ENCODE measurements at regions of chr19 and their contacts with region 1.

Region 1: GRCh38 chr19:46542428-46543230 is 47.0 kb upstream of the PNMA8B start:
- DNase-seq: peak; percentile 90
- ATAC-seq: peak; percentile 64
- H3K4me3 Mint-ChIP-seq: no peak overlapping the region
- H3K27ac Mint-ChIP-seq: no peak overlapping the region
- H3K4me1 Mint-ChIP-seq: peaks cover 9% of the 10 kb centered on the region
- H3K27me3 Mint-ChIP-seq: no peaks in the 10 kb centered on the region

Region 2: DNA sequence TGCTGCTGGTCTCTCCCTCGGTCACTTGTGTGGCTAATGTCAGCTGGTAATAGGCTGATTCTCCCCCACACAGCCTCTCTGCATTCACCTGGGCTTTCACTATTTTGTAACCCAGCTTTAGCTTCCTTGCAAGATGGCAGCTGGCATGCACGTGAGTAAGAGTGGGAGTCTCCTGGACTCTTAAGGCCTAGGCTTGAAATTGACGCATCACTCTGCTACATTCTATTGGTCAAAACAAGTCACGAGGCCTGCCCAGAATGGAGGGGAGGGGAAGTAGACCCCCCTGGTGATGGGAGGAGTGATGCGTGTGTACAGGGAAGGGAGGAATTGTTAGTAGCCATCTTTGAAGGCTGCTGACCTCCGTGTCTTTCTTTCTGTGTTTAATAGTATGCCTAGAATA is 22.0 kb before region 1 on chr19:
- CTCF ChIA-PET with region 1: interaction called, 37 read pairs
- POLR2A ChIA-PET with region 1: interaction called, 8 read pairs
- intact Hi-C with region 1: loop called (anchors 1 kb)
- DNase-seq: no peak
- ATAC-seq: no peak
- H3K4me3 Mint-ChIP-seq: no peak overlapping the region
- H3K27ac Mint-ChIP-seq: peak overlapping the region; percentile 47
- H3K4me1 Mint-ChIP-seq: peaks cover 57% of the 10 kb centered on the region
- H3K27me3 Mint-ChIP-seq: no peaks in the 10 kb centered on the region

Region 3: GRCh38 chr19:46529622-46530462 is 12.8 kb before region 1 on chr19:
- CTCF ChIA-PET with region 1: interaction called, 60 read pairs
- POLR2A ChIA-PET with region 1: no interaction called
- intact Hi-C with region 1: loop called (anchors 1 kb)
- DNase-seq: peak; percentile 86
- ATAC-seq: peak; percentile 75
- H3K4me3 Mint-ChIP-seq: no peak overlapping the region
- H3K27ac Mint-ChIP-seq: peak overlapping the region; percentile 74
- H3K4me1 Mint-ChIP-seq: peaks cover 24% of the 10 kb centered on the region
- H3K27me3 Mint-ChIP-seq: no peaks in the 10 kb centered on the region